IMR-90 (cell line): ENCODE measurements at regions of chr1 and their contacts with region 1.

Region 1: DNA sequence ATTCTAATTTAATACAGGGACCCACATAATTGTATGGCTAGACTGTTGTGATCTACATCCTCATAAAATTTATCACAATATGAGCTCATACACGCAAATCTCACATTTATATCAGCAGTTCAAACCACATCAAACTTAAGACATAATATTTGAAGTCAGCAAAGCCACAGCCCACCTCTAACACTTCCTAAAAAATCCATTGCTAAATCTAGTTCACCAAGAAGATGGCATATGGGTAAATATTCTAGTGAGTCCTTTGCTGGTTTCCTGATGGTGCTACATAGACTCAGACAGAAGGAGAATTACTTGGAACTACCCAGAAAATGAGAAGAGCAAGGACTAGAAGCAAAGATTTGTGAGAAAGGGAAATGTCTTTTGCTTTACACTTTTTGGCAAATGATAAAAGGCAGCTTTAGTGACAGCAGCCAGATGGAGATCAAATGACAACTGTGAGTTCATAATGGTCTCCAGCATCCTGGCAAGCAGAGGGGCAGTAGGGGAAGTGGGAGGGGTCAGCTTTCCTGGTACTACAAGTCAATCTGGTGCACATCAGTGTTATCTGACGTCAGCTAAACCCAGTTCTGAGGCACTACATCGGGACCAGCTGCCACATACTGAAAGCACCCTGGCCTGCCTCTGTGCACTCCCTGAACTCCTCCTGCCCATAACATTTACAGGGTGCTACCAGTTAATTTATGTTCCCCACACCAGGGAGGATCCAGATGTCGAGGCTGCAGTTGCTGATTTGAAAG is 10.6 kb upstream of the GADD45A start:
- DNase-seq: peak; percentile 76
- ATAC-seq: peak; percentile 74
- H3K4me3 ChIP-seq: no peak overlapping the region
- H3K27ac ChIP-seq: no peak overlapping the region
- H3K4me1 ChIP-seq: peaks cover 4% of the 10 kb centered on the region
- H3K27me3 ChIP-seq: no peaks in the 10 kb centered on the region; the same call in 1 of the 2 replicates
- CTCF ChIP-seq: no peak
- POLR2A ChIP-seq: no peak
- RAD21 ChIP-seq: no peak

Region 2: DNA sequence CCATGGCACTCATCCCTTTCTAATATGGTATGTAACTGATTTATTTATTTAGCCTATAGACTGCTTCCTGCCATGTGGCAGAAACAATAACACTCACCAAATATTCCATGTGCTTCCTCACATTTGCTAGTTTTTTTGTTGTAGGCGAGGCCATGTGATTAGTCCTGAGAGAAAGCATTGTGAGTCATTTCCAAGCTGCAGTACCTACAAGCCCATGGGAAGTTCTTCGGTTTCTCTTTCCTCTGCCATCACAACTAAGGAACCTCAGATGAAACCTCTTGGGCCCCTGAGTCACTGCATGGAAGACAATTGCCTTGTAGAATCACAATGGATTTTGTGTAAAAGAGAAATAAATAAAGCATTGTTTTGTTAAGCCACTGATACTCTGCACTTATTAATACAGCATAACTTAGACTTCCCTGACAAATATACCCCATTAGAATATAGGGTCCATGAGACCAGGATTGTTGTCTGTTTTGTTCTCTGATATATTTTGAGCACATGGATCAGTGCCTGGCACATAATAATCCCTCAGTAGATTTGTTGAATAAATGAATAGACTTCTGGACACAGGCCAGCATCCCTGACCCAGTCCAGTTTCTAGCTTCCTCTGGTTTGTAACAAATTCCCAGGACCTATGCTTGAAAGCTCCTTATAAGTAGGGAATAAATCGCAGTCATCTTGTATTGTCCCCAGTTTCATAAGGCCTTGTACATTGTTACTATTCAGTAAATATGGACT is 47.8 kb before region 1 on chr1:
- CTCF ChIA-PET with region 1: no interaction called
- POLR2A ChIA-PET with region 1: no interaction called
- dilution Hi-C with region 1: no loop called
- in situ Hi-C with region 1: no loop called
- intact Hi-C with region 1: loop called (anchors 5 kb)
- DNase-seq: peak; percentile 91
- ATAC-seq: peak; percentile 67
- H3K4me3 ChIP-seq: no peak overlapping the region
- H3K27ac ChIP-seq: no peak overlapping the region
- H3K4me1 ChIP-seq: peaks cover 1% of the 10 kb centered on the region; the same call in 1 of the 2 replicates
- H3K27me3 ChIP-seq: no peaks in the 10 kb centered on the region; the same call in 1 of the 2 replicates
- CTCF ChIP-seq: no peak
- POLR2A ChIP-seq: no peak
- RAD21 ChIP-seq: no peak